ENCODE measurements at regions of chr11 and their contacts with region 1.

Region 1: DNA sequence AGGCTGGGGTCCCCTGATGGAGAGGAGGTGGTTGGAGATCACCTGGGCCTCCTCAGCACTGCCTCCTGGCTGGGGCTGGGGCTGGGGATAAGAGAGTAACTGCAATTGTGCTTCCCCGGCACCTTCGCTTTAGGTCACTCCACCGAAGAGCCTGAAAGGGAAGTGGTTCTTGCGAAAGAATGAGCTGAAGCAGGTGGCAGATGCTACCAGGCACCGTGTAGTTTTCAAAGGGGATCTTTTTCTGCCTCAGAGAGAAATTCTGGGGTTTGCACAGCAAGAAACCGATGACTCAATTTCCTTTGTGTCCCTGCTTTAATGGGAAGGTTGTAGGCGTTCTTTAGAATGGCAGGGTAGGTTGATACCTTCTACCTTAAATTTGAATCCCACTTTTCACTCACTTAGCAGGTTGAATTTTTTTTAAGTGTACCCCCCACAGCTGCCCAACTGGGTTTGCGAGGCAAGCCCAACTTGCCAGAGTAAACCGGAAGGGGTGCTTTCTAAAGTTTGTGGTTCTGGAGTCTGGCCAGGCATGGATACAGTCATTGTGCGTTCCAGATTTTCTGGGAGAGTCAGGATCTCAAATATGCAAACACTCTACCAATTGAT is 5.3 kb downstream of the CD44 start:
- DNase-seq: no peak
- ATAC-seq: no peak
- H3K4me3 ChIP-seq: peak overlapping the region; percentile 95 to 98
- H3K27ac ChIP-seq: peak overlapping the region; percentile 97
- H3K4me1 ChIP-seq: peaks cover 68% of the 10 kb centered on the region
- H3K27me3 ChIP-seq: no peaks in the 10 kb centered on the region
- CTCF ChIP-seq: 0 out of 2 replicates have a peak, but pooled peaks have one; percentile 5

Region 2: GRCh38 chr11:34997952-34998528 is 146.2 kb before region 1 on chr11:
- CTCF ChIA-PET with region 1: no interaction called
- POLR2A ChIA-PET with region 1: interaction called, 3 read pairs
- in situ Hi-C with region 1: no loop called
- intact Hi-C with region 1: loop called (anchors 5 kb)
- DNase-seq: no peak
- ATAC-seq: peak; percentile 65
- H3K4me3 ChIP-seq: no peak overlapping the region
- H3K27ac ChIP-seq: peak overlapping the region; percentile 91
- H3K4me1 ChIP-seq: peaks cover 21% of the 10 kb centered on the region
- H3K27me3 ChIP-seq: no peaks in the 10 kb centered on the region
- CTCF ChIP-seq: peak; percentile 49; the same call in 1 of the 2 replicates

Region 3: DNA sequence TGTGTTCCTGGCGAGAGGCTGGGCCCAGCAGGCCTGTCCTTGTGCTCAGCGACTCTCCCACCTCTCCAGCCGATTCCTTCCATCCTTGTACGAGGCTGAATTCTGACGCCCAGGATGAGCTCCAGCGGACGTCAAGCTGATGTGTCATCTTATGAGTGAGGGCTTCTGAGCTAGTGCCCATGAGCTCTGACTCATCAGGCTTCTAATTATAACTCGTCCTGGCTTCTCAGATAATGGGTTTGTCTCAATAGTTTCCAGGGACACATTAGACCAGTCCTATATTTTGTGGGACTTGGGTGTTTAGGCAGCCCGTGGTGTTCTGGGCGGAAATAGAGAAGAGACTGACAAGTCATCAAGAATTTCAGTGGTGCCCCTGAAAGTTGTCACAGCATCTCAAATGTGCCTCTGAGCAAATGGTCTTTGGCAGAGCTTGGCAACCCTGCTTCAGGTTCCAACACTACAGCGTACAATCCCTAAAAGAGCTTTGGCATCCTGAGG is 113.5 kb before region 1 on chr11:
- CTCF ChIA-PET with region 1: no interaction called
- POLR2A ChIA-PET with region 1: interaction called, 5 read pairs
- in situ Hi-C with region 1: no loop called
- intact Hi-C with region 1: loop called (anchors 5 kb)
- DNase-seq: peak; percentile 93
- ATAC-seq: peak; percentile 94
- H3K4me3 ChIP-seq: peak overlapping the region in 1 of 2 experiments; percentile 26; a peak in 1 of 4 replicates
- H3K27ac ChIP-seq: peak overlapping the region; percentile 92
- H3K4me1 ChIP-seq: peaks cover 36% of the 10 kb centered on the region
- H3K27me3 ChIP-seq: no peaks in the 10 kb centered on the region
- CTCF ChIP-seq: no peak

Region 4: GRCh38 chr11:35082321-35083182 is 61.7 kb before region 1 on chr11:
- CTCF ChIA-PET with region 1: no interaction called
- POLR2A ChIA-PET with region 1: interaction called, 11 read pairs
- in situ Hi-C with region 1: no loop called
- intact Hi-C with region 1: loop called (anchors 5 kb)
- DNase-seq: peak; percentile 24
- ATAC-seq: peak; percentile 83
- H3K4me3 ChIP-seq: peak overlapping the region; percentile 11 to 36; a peak in 3 of 4 replicates
- H3K27ac ChIP-seq: peak overlapping the region; percentile 98
- H3K4me1 ChIP-seq: peaks cover 61% of the 10 kb centered on the region
- H3K27me3 ChIP-seq: no peaks in the 10 kb centered on the region
- CTCF ChIP-seq: no peak

Region 5: DNA sequence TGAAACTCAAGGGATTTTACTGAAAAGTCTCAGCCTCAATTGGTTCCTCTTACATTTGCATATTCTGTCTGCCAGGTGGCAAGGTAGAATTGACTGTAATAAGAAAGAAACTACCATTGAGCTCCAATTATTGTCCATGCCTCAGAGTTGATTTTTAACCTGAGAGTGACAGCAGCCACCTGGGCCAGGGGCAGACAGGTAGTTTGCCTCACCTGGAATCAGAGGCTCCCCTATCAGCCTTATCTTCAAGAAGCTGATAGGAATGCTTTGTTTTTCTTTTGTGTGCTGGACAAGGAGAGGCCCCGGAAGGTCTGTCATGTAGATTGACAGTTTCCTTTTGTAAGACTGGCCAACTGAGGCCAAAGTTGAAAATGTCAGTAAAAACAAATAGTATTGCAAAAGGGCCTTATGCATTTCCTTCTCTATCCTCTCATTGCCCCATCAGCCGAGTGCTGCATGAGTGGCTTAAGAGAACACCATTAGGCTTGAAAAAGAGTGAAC is 28.8 kb after region 1 on chr11:
- CTCF ChIA-PET with region 1: no interaction called
- POLR2A ChIA-PET with region 1: no interaction called
- in situ Hi-C with region 1: no loop called
- intact Hi-C with region 1: no loop called
- DNase-seq: no peak
- ATAC-seq: no peak
- H3K4me3 ChIP-seq: no peak overlapping the region
- H3K27ac ChIP-seq: peak overlapping the region; percentile 99
- H3K4me1 ChIP-seq: peaks cover 95% of the 10 kb centered on the region
- H3K27me3 ChIP-seq: no peaks in the 10 kb centered on the region
- CTCF ChIP-seq: no peak

Region 6: GRCh38 chr11:35257281-35257680 is 113.0 kb after region 1 on chr11:
- CTCF ChIA-PET with region 1: no interaction called
- POLR2A ChIA-PET with region 1: no interaction called
- in situ Hi-C with region 1: no loop called
- intact Hi-C with region 1: no loop called
- DNase-seq: no peak
- ATAC-seq: no peak
- H3K4me3 ChIP-seq: no peak overlapping the region
- H3K27ac ChIP-seq: no peak overlapping the region
- H3K4me1 ChIP-seq: 0 out of 2 replicates have a peak, but pooled peaks cover 7% of the 10 kb centered on the region
- H3K27me3 ChIP-seq: no peaks in the 10 kb centered on the region
- CTCF ChIP-seq: no peak

Measured in Panc1 (cell line).